ENCODE measurements at regions of chr11 and their contacts with region 1.

Region 1: DNA sequence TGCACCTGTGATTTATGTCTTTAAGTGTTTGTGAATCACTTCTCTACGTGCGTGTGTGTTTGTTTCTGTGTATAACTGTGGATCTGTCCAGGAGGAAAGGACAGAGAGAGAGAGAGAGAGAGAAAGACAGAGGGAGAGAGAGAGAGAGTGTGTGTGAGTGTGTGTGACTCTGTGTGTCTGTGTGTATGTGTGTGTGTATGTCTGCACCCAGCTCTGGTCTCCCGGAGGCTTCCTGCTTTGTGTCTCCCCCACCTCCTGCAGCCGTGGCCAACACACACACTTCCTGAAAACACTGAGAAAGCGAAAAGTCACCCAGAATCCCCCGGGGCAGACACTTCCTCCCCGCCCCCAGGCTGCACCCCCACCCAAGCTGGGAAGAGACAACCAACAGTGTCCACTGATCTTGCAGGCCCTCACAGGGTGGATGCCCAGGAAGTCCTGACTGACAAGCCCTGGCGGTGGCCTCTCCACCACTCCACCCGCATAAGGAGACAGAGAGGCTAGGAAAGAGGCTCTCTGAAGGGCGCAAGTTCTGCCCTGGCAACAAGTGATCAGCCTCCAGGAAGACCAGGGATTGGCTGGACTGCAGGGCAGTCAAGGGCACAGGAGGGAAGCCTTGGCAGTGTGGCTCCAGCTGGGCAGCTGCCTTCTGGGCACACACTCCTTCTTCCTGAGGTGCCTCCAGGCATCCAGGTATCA is 30.0 kb downstream of the ARAP1 start:
- DNase-seq: peak; percentile 88
- ATAC-seq: peak; percentile 92
- H3K4me3 ChIP-seq: peak overlapping the region; percentile 58
- H3K27ac ChIP-seq: peak overlapping the region; percentile 50
- H3K4me1 ChIP-seq: peaks cover 22% of the 10 kb centered on the region
- H3K27me3 ChIP-seq: no peaks in the 10 kb centered on the region
- CTCF ChIP-seq: no peak

Region 2: GRCh38 chr11:72793425-72794367 is 71.5 kb after region 1 on chr11 and contains the start of gene STARD10:
- CTCF ChIA-PET with region 1: interaction called, 21 read pairs
- POLR2A ChIA-PET with region 1: no interaction called
- intact Hi-C with region 1: loop called (anchors 1 kb)
- DNase-seq: peak; percentile 99
- ATAC-seq: peak; percentile 95
- H3K4me3 ChIP-seq: peak within 1 kb of the TSS; percentile 77
- H3K27ac ChIP-seq: peak within 1 kb of the TSS; percentile 40
- H3K4me1 ChIP-seq: peaks cover 27% of the 10 kb centered on the region
- H3K27me3 ChIP-seq: no peaks in the 10 kb centered on the region
- CTCF ChIP-seq: peak; percentile 99
- total RNA-seq, gene STARD10: 284 and 362 TPM in 2 replicates

Region 3: GRCh38 chr11:72814286-72815109 is 92.3 kb after region 1 on chr11 and contains the start of gene ATG16L2:
- CTCF ChIA-PET with region 1: interaction called, 4 read pairs
- POLR2A ChIA-PET with region 1: interaction called, 8 read pairs
- intact Hi-C with region 1: loop called (anchors 5 kb)
- DNase-seq: peak; percentile 92
- ATAC-seq: peak; percentile 73
- H3K4me3 ChIP-seq: peak within 1 kb of the TSS; percentile 79
- H3K27ac ChIP-seq: peak within 1 kb of the TSS; percentile 89
- H3K4me1 ChIP-seq: peaks cover 30% of the 10 kb centered on the region
- H3K27me3 ChIP-seq: no peaks in the 10 kb centered on the region
- CTCF ChIP-seq: no peak
- total RNA-seq, gene ATG16L2: 12.2 and 16.2 TPM in 2 replicates

Region 4: DNA sequence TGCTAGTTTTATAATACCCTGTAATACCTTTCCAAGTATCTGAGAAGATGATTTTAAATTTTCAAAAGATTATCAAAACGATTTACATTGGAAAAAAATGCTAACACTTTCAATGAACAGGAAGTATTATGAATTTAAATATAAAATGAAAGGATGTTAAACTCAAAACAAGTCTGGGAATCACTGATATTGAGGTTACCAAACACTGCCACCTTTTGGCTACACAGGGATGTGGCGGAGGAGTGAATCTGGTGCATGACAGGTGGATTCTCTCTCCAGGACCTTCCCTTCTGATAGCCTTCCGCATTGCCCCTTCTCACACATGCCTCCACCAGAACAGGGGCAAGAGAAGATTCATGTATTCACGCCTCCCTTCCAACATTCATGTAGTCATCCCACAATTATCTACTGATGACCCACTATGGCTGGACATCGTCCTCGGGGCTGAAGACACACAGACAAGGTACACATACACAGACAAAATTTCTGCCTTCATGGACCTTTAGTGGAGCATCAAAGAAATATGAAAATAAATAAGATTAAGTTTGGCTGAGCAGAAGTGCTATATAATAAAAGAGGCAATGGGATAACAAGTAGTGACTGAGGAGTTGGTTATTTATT is 126.8 kb after region 1 on chr11:
- CTCF ChIA-PET with region 1: interaction called, 4 read pairs
- POLR2A ChIA-PET with region 1: no interaction called
- intact Hi-C with region 1: loop called (anchors 10 kb)
- DNase-seq: peak; percentile 73
- ATAC-seq: peak; percentile 75
- H3K4me3 ChIP-seq: no peak overlapping the region
- H3K27ac ChIP-seq: no peak overlapping the region
- H3K4me1 ChIP-seq: no peaks in the 10 kb centered on the region
- H3K27me3 ChIP-seq: no peaks in the 10 kb centered on the region
- CTCF ChIP-seq: peak; percentile 92

Region 5: DNA sequence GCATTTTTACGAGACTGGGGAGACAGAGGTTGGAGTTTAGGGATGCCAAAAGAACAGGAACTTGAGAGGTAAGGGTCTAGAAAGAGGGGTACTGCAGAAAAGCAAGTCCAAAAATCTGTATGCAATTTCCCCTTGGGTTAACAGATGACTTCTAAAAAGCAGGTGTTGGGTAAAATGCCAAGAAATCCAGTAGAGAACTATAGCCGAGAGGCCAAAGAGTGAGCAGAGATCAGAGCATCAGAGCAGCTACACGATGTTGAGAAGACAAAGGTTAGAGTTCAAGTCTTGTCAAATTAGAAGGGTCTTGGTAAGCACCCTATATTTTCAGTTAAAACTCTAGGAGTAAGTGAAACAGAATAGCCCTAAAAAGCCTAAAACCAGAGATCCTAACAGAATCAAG is 274.8 kb after region 1 on chr11:
- CTCF ChIA-PET with region 1: no interaction called
- POLR2A ChIA-PET with region 1: no interaction called
- intact Hi-C with region 1: no loop called
- DNase-seq: no peak
- ATAC-seq: no peak
- H3K4me3 ChIP-seq: no peak overlapping the region
- H3K27ac ChIP-seq: no peak overlapping the region
- H3K4me1 ChIP-seq: peaks cover 14% of the 10 kb centered on the region
- H3K27me3 ChIP-seq: no peaks in the 10 kb centered on the region
- CTCF ChIP-seq: no peak

Region 6: GRCh38 chr11:73177778-73178577 is 455.8 kb after region 1 on chr11:
- CTCF ChIA-PET with region 1: interaction called, 11 read pairs
- POLR2A ChIA-PET with region 1: no interaction called
- intact Hi-C with region 1: loop called (anchors 2 kb)
- DNase-seq: peak; percentile 92
- ATAC-seq: peak; percentile 88
- H3K4me3 ChIP-seq: no peak overlapping the region
- H3K27ac ChIP-seq: no peak overlapping the region
- H3K4me1 ChIP-seq: peaks cover 21% of the 10 kb centered on the region
- H3K27me3 ChIP-seq: no peaks in the 10 kb centered on the region
- CTCF ChIP-seq: peak; percentile 97